Activated CD8-positive, alpha-beta T cell treated with anti-CD3 and anti-CD28 coated beads, Interleukin-2, amount 10 ng/mL, durations not matched to agents 7 days and 5 days (primary cell): ENCODE measurements at regions of chr12 and their contacts with region 1.

Region 1: GRCh38 chr12:51270067-51270970 is at the start of gene SMAGP:
- DNase-seq: peak; percentile 61
- ATAC-seq: peak; percentile 79
- H3K4me3 Mint-ChIP-seq: peak within 1 kb of the TSS; percentile 85
- H3K27ac Mint-ChIP-seq: peak within 1 kb of the TSS; percentile 67
- H3K4me1 Mint-ChIP-seq: peaks cover 28% of the 10 kb centered on the region
- H3K27me3 Mint-ChIP-seq: peaks cover 17% of the 10 kb centered on the region
- total RNA-seq, gene SMAGP: 4.3 to 4.7 TPM

Region 2: GRCh38 chr12:51225771-51226170 is 44.5 kb before region 1 on chr12:
- CTCF ChIA-PET with region 1: no interaction called
- POLR2A ChIA-PET with region 1: no interaction called
- DNase-seq: no peak
- ATAC-seq: no peak
- H3K4me3 Mint-ChIP-seq: no peak overlapping the region
- H3K27ac Mint-ChIP-seq: no peak overlapping the region
- H3K4me1 Mint-ChIP-seq: no peaks in the 10 kb centered on the region
- H3K27me3 Mint-ChIP-seq: no peaks in the 10 kb centered on the region

Region 3: DNA sequence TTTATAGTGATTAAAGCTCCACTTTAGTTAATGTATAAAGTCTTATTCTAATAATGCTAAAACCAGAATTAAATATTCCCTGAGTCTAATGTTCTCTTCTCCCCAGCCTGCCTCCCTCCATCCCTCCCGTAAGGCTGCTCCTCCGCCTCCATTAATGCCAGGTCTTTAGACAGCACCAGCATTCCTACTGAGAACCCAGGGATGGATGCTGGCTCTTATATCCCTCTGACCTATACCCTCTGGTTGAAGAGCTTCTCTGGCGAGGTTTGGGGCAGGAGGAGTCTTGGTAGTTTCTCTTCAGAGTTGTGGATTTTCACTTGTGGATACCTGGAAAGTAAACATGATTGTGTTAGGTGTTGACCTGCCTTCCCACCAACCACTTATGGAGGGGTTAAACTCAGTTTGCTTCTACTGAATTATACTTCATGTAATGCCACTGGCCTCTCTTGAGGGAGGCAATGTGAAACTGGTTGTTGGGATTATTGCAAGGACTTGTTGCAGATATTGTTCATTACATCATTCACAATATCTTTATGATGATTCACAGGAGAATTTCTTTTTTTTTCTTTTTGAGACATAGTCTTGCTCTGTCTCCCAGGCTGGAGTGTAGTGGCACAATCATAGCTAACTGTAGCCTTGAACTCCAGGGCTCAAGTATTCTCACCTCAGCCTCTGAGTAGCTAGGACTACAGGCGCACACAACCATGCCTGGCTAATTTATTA is 11.0 kb after region 1 on chr12:
- CTCF ChIA-PET with region 1: interaction called, 12 read pairs
- POLR2A ChIA-PET with region 1: no interaction called
- DNase-seq: no peak
- ATAC-seq: no peak
- H3K4me3 Mint-ChIP-seq: no peak overlapping the region
- H3K27ac Mint-ChIP-seq: no peak overlapping the region
- H3K4me1 Mint-ChIP-seq: no peaks in the 10 kb centered on the region
- H3K27me3 Mint-ChIP-seq: no peaks in the 10 kb centered on the region

Region 4: DNA sequence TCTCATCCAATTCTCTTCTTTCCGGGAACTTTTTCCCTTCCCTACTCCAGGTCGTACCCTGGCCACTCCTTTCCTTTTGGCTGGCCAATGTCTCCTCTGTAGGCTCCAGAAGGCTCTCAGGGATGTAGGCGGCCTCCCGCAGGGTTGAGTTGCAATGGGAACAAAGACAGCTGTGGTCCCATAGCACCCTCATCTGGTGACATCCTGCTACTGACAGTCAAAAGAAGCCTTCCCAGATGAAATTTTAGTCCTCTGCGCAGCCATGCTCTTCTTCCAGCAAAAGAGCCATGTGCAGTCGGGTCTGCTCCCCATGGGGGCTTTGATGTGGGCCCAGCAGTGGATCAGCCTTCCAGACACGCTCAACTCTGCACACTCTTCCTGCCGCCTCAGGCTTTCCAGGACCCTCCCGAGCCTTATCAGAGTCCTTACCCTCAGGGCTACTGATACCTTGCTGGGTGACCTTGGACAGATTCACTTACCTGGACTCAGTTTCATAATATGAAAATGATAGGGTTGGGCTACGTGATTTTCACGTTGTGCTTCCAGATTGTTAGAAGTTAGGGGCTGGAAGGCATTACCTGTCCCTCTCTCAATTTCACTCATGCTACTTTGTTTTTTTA is 81.7 kb after region 1 on chr12:
- CTCF ChIA-PET with region 1: interaction called, 17 read pairs
- POLR2A ChIA-PET with region 1: no interaction called
- DNase-seq: peak; percentile 51
- ATAC-seq: no peak
- H3K4me3 Mint-ChIP-seq: no peak overlapping the region
- H3K27ac Mint-ChIP-seq: no peak overlapping the region
- H3K4me1 Mint-ChIP-seq: no peaks in the 10 kb centered on the region
- H3K27me3 Mint-ChIP-seq: no peaks in the 10 kb centered on the region